Esophagus muscularis mucosa (tissue), 4 donors: ENCODE measurements at regions of chr19 and their contacts with region 1.

Region 1: GRCh38 chr19:13880059-13881043 is 3.4 kb downstream of the NANOS3 start:
- DNase-seq: peak; percentile 99
- H3K4me3 ChIP-seq: peak overlapping the region; percentile 36 to 50 (median 42)
- H3K27ac ChIP-seq: peak overlapping the region; percentile 74 to 79 (median 78)
- H3K4me1 ChIP-seq: peaks cover 15 to 32% (median 27%) of the 10 kb centered on the region in 4 donors
- H3K27me3 ChIP-seq: no peaks in the 10 kb centered on the region
- CTCF ChIP-seq: peak; percentile 98 to 100 (median 98)
- EP300 ChIP-seq: no peak
- POLR2A ChIP-seq: no peak

Region 2: DNA sequence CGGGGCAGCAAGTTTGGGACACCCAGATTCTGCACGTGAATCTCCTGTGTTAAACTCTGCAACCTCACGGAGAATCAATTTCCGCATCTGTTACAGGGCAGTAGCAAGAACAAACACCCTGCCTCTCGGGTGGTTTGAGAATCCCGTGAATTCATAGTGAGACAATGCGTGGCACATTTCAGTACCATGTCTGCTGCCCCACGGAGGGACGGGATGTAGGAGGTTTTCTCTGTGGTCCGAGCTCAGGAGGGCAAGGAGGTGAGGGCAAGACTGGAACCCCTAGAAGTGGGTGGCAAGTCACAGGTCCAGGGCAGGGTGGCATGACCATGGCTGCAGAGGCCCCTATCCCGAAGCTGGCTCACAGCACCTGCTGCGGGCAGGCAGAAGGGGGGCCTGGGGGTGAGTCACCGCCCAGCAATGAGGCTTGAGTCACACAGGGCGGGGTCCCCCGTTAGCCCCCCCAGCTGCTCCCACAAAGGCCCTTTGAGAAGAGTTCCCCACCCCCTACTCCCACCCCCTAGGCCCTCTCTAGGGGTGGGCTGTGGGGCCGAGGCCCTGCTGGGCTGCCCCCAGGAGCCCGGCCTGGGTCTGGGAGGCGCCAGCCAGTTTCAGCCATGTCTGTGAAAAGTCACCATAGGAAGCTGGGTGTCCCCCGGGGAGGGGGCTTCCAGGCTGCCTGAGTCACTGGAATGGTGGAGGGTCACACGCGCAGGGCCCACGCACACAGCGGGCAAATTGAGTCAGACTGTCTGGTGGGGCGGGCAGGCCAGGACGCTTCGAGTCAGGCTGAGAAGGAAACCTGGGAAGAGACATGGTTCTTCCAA is 29.2 kb before region 1 on chr19:
- intact Hi-C with region 1: no loop called
- DNase-seq: peak; percentile 97
- H3K4me3 ChIP-seq: peak overlapping the region; percentile 47 to 50 (median 49)
- H3K27ac ChIP-seq: peak overlapping the region; percentile 99 to 100 (median 100)
- H3K4me1 ChIP-seq: peaks cover 61 to 78% (median 73%) of the 10 kb centered on the region in 4 donors
- H3K27me3 ChIP-seq: no peaks in the 10 kb centered on the region
- CTCF ChIP-seq: no peak
- EP300 ChIP-seq: peak; percentile 53
- POLR2A ChIP-seq: no peak

Region 3: DNA sequence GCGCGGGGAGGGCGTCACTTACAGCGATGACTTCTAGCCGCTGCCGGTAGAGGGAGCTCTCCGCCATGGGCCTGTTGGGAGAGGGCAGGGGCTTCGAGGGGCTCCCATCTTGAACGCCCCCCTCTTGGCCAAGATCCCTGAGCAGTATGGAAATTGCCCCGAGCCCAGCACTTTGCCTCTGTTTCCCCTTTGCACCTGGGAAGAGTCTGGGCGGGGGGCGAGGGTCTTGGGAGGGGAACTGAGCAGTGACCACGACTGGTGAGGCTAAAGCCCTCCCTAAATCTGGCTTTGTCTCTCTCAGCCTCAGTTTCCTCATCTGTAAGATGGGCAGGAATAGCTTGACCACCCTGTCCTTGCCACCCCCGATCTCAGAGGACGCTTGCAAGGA is 178.7 kb after region 1 on chr19:
- intact Hi-C with region 1: loop called (anchors 5 kb)
- DNase-seq: no peak
- H3K4me3 ChIP-seq: no peak overlapping the region
- H3K27ac ChIP-seq: no peak overlapping the region
- H3K4me1 ChIP-seq: peaks cover 5 to 28% (median 26%) of the 10 kb centered on the region in 4 donors
- H3K27me3 ChIP-seq: peaks cover 0 to 67% (median 23%) of the 10 kb centered on the region in 4 donors
- CTCF ChIP-seq: peak; percentile 25 to 66 (median 41)
- EP300 ChIP-seq: no peak
- POLR2A ChIP-seq: no peak